ENCODE measurements at regions of chr5 and their contacts with region 1.

Region 1: DNA sequence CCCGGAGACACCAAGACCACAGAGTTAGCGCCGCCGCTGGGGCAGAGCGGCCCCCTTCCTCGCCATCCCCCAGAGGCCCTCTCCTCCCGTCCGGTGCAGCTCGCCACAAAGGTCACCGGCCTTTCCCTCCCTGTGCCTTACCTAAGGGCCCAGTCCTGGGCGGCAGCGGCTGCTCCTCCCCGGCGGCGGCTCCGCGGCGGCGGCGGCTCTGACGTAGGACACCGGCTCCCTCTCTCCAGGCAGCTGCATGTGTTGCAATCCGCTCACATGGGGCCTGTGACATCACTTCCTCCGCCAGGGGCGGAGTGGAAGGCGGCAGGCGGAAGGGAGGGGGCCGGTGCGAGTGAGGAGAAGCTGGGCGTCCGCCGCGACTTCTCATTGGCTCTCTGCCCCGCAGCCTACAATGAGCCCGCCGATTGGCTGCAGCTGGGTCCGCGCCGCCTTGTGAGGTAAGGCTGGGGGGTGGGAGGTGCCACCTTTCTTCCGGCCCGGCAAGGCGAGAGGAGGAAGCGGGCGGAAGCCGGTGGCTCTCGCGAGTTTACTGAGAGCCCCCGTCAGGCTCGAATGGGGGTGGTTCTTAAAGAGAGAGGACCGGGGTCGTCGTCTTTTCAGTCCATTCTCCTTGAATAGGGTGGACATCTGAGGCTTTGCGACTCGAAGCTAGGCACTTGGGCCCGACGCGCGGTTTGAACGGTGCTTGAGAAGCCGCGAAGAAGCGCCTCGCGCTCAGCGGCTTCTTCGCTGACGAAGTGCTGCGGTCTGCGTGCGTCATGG is at the start of gene ETF1:
- DNase-seq: peak; percentile 100
- H3K4me3 ChIP-seq: peak within 1 kb of the TSS; percentile 80 to 96 (median 82)
- H3K27ac ChIP-seq: peak within 1 kb of the TSS; percentile 100
- H3K4me1 ChIP-seq: peaks cover 36% of the 10 kb centered on the region
- H3K27me3 ChIP-seq: no peaks in the 10 kb centered on the region
- CTCF ChIP-seq: no peak
- total RNA-seq, gene ETF1: 167 to 200 TPM

Region 2: GRCh38 chr5:138352071-138352721 is 190.9 kb before region 1 on chr5 and contains the start of gene KDM3B:
- CTCF ChIA-PET with region 1: no interaction called
- dilution Hi-C with region 1: no loop called
- in situ Hi-C with region 1: no loop called
- intact Hi-C with region 1: loop called (anchors 2 kb)
- DNase-seq: peak; percentile 81
- H3K4me3 ChIP-seq: peak within 1 kb of the TSS; percentile 77 to 83 (median 82)
- H3K27ac ChIP-seq: peak within 1 kb of the TSS; percentile 65
- H3K4me1 ChIP-seq: peaks cover 18% of the 10 kb centered on the region
- H3K27me3 ChIP-seq: no peaks in the 10 kb centered on the region
- CTCF ChIP-seq: peak; percentile 98
- total RNA-seq, gene KDM3B: 35.6 to 42.7 TPM

Region 3: GRCh38 chr5:138449501-138450239 is 93.5 kb before region 1 on chr5:
- CTCF ChIA-PET with region 1: no interaction called
- dilution Hi-C with region 1: no loop called
- in situ Hi-C with region 1: no loop called
- intact Hi-C with region 1: loop called (anchors 1 kb)
- DNase-seq: peak; percentile 76
- H3K4me3 ChIP-seq: no peak overlapping the region
- H3K27ac ChIP-seq: no peak overlapping the region
- H3K4me1 ChIP-seq: peaks cover 6% of the 10 kb centered on the region
- H3K27me3 ChIP-seq: no peaks in the 10 kb centered on the region
- CTCF ChIP-seq: peak; percentile 91 to 95

Region 4: GRCh38 chr5:138464008-138464387 is 79.1 kb before region 1 on chr5:
- CTCF ChIA-PET with region 1: no interaction called
- dilution Hi-C with region 1: no loop called
- in situ Hi-C with region 1: loop called in 1 of 2 experiments (anchors 10 kb)
- intact Hi-C with region 1: loop called (anchors 1 kb)
- DNase-seq: peak; percentile 94
- H3K4me3 ChIP-seq: peak overlapping the region; percentile 66 to 90 (median 83)
- H3K27ac ChIP-seq: peak overlapping the region; percentile 84
- H3K4me1 ChIP-seq: peaks cover 45% of the 10 kb centered on the region
- H3K27me3 ChIP-seq: no peaks in the 10 kb centered on the region
- CTCF ChIP-seq: peak; percentile 58 to 71

Region 5: GRCh38 chr5:138752951-138753793 is 210.0 kb after region 1 on chr5 and contains the start of gene CTNNA1:
- CTCF ChIA-PET with region 1: no interaction called
- dilution Hi-C with region 1: no loop called
- in situ Hi-C with region 1: no loop called
- intact Hi-C with region 1: no loop called
- DNase-seq: peak; percentile 83
- H3K4me3 ChIP-seq: peak within 1 kb of the TSS; percentile 88 to 99 (median 94)
- H3K27ac ChIP-seq: peak within 1 kb of the TSS; percentile 94
- H3K4me1 ChIP-seq: peaks cover 11% of the 10 kb centered on the region
- H3K27me3 ChIP-seq: no peaks in the 10 kb centered on the region
- CTCF ChIP-seq: no peak
- total RNA-seq, gene CTNNA1: 348 to 366 TPM

Measured in mammary epithelial cell (primary cell).